Heart left ventricle (tissue), 16 donors: ENCODE measurements at regions of chr1 and their contacts with region 1.

Region 1: GRCh38 chr1:181166377-181167196 is 78.1 kb downstream of the IER5 start:
- DNase-seq: peak in 4 of 5 donors; percentile 67 to 75 (median 70)
- ATAC-seq: peak; percentile 92 to 99 (median 97)
- H3K4me3 ChIP-seq: no peak overlapping the region
- H3K27ac ChIP-seq: no peak overlapping the region
- H3K4me1 ChIP-seq: peaks cover 0 to 9% (median 0%) of the 10 kb centered on the region in 12 donors
- H3K27me3 ChIP-seq: no peaks in the 10 kb centered on the region
- CTCF ChIP-seq: peak; percentile 78 to 90 (median 86)
- POLR2A ChIP-seq: no peak

Region 2: GRCh38 chr1:180502360-180503273 is 664.0 kb before region 1 on chr1 and contains the start of gene ACBD6:
- intact Hi-C with region 1: loop called in 1 of 10 experiments (anchors 10 kb)
- DNase-seq: peak; percentile 82 to 91 (median 84)
- ATAC-seq: peak; percentile 87 to 96 (median 94)
- H3K4me3 ChIP-seq: peak within 1 kb of the TSS; percentile 75 to 95 (median 90)
- H3K27ac ChIP-seq: peak within 1 kb of the TSS; percentile 84 to 95 (median 92)
- H3K4me1 ChIP-seq: peaks cover 0 to 32% (median 15%) of the 10 kb centered on the region in 12 donors
- H3K27me3 ChIP-seq: no peaks in the 10 kb centered on the region
- CTCF ChIP-seq: peak in 4 of 12 donors; percentile 20 to 28 (median 24)
- POLR2A ChIP-seq: peak in 1 of 2 donors; percentile 53
- total RNA-seq, gene ACBD6: 18.6 to 24.6 (median 21.5) TPM

Region 3: GRCh38 chr1:180623579-180624347 is 542.8 kb before region 1 on chr1:
- intact Hi-C with region 1: loop called in 1 of 10 experiments (anchors 10 kb)
- DNase-seq: no peak
- ATAC-seq: no peak
- H3K4me3 ChIP-seq: no peak overlapping the region
- H3K27ac ChIP-seq: no peak overlapping the region
- H3K4me1 ChIP-seq: no peaks in the 10 kb centered on the region
- H3K27me3 ChIP-seq: no peaks in the 10 kb centered on the region
- CTCF ChIP-seq: peak in 8 of 12 donors; percentile 7 to 41 (median 18)
- POLR2A ChIP-seq: no peak

Region 4: DNA sequence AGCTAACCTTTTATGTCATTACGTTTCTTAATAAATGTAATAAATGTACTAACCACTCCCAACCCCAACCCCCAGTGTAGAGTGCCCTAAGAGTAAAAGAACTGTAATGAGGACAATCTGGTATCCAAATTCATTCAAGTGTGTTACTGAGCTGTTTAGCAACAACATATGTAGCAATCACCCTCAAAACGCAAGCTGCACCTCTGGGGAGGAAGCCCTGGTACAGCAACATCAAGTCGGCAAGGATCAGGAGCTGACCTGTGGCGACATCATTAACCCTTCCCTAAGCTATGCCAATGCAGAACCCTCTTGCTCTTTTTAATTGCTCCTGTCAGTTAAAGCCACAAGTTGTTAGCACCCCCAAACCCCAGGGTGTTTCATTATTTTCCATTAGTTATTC is 191.0 kb before region 1 on chr1:
- intact Hi-C with region 1: loop called in 1 of 10 experiments (anchors 10 kb)
- DNase-seq: no peak
- ATAC-seq: no peak
- H3K4me3 ChIP-seq: no peak overlapping the region
- H3K27ac ChIP-seq: no peak overlapping the region
- H3K4me1 ChIP-seq: peaks cover 0 to 13% (median 3%) of the 10 kb centered on the region in 12 donors
- H3K27me3 ChIP-seq: no peaks in the 10 kb centered on the region
- CTCF ChIP-seq: no peak
- POLR2A ChIP-seq: no peak

Region 5: GRCh38 chr1:181142096-181142958 is 24.3 kb before region 1 on chr1:
- intact Hi-C with region 1: loop called in 4 of 10 experiments (anchors 1 to 2 kb)
- DNase-seq: peak; percentile 86 to 93 (median 88)
- ATAC-seq: peak; percentile 94 to 96 (median 95)
- H3K4me3 ChIP-seq: peak overlapping the region in 9 of 12 donors; percentile 15 to 52 (median 33)
- H3K27ac ChIP-seq: peak overlapping the region in 5 of 12 donors; percentile 1 to 60 (median 30)
- H3K4me1 ChIP-seq: peaks cover 0 to 48% (median 26%) of the 10 kb centered on the region in 12 donors
- H3K27me3 ChIP-seq: no peaks in the 10 kb centered on the region
- CTCF ChIP-seq: peak; percentile 91 to 99 (median 97)
- POLR2A ChIP-seq: no peak